Sciatic nerve (tissue), 2 donors: ENCODE measurements at regions of chr10 and their contacts with region 1.

Region 1: DNA sequence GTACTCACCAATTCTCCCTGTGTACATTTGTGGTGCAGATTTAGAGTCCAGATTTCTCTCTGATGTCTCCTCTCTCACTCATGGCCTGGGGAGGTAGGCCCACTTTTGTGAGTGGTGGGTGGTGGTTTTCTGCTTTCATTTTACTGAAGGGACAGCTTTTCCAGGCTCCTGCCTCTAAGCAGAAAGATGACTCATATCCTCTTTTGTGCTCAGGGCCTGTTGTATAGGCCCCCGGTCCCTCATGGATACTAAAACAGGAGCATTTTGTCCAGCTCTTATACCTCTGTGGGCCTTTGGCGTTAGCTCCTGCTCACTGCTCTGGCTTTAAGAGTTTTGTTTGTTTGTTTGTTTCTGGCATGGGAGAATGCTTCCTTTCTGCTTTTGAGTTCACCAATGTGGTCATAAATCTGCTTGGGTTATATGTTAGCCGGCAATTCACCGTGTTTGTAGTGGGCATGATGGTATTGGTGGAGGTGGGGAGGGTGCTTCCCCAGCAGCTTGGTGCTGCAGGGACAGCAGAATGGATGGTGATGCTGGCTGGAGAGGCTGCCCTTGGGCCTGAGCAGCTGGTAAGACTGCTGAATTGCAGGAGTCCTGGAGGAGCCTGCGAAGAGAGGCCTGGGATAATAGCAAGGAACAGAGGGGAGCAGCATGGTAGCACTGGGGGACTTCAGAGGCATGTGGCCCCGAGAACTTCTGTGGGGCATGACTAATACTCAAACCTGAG is 468.7 kb downstream of the RPS24 start:
- DNase-seq: no peak
- ATAC-seq: no peak

Region 2: DNA sequence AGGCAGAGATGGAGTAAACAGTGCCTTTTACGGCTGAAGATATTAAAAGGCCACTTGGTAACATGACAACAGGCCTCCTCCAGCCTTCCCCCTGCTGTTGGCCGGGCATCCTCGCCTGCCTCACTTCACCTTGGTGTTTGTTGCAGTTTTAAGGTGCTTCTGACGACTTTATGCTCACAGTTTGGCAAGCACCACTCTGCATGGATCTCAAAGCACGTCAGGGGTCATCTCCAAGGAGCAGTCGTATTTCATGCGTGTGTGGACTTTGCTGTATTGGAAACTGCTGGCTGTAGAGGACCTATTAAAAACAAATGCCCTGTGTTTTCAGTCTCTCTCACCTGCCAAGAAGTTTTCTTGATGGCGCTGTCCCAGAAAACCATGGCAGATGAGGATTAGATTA is 14.4 kb after region 1 on chr10:
- intact Hi-C with region 1: loop called (anchors 1 kb)
- DNase-seq: no peak
- ATAC-seq: no peak

Region 3: DNA sequence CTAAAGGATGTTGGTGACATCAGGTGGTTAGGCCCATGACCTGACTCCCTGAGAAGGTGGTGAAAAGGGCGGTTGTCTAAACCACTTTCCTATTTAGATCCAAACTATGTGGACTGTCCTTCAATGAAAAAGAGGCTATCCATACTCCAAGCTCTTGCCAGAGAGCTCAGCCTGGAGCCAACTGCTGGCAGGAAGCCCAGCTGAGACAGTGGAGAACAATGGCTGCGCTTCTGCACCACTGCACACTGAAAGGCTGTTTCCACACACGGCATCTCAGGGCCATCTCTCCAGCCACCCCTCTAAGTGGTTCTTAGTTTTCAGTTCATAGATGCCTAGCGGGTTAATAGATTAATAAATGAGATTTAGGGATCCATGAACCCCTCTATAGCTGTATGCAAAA is 77.6 kb after region 1 on chr10:
- intact Hi-C with region 1: no loop called
- DNase-seq: peak; percentile 79
- ATAC-seq: peak; percentile 76